Naive thymus-derived CD4-positive, alpha-beta T cell (primary cell): ENCODE measurements at regions of chr1 and their contacts with region 1.

Region 1: GRCh38 chr1:56584910-56585528 is 5.7 kb upstream of the PLPP3 start:
- DNase-seq: no peak
- ATAC-seq: no peak
- H3K4me3 ChIP-seq: no peak overlapping the region
- H3K4me3 Mint-ChIP-seq: no peak overlapping the region
- H3K27ac ChIP-seq: no peak overlapping the region
- H3K27ac Mint-ChIP-seq: no peak overlapping the region
- H3K4me1 ChIP-seq: no peaks in the 10 kb centered on the region
- H3K4me1 Mint-ChIP-seq: peaks cover 0 to 2% (median 0%) of the 10 kb centered on the region in 7 donors
- H3K27me3 ChIP-seq: no peaks in the 10 kb centered on the region
- H3K27me3 Mint-ChIP-seq: peaks cover 13 to 18% (median 16%) of the 10 kb centered on the region in 5 donors

Region 2: GRCh38 chr1:54950369-54951163 is 1634.5 kb before region 1 on chr1:
- CTCF ChIA-PET with region 1: no interaction called
- POLR2A ChIA-PET with region 1: no interaction called
- intact Hi-C with region 1: loop called in 1 of 2 experiments (anchors 5 kb)
- DNase-seq: peak in 5 of 9 donors; percentile 7 to 53 (median 22)
- ATAC-seq: peak; percentile 65
- H3K4me3 ChIP-seq: no peak overlapping the region
- H3K4me3 Mint-ChIP-seq: peak overlapping the region in 3 of 10 donors; percentile 25 to 48 (median 43)
- H3K27ac ChIP-seq: no peak overlapping the region
- H3K27ac Mint-ChIP-seq: no peak overlapping the region
- H3K4me1 ChIP-seq: peaks cover 0 to 4% of the 10 kb centered on the region in 2 donors
- H3K4me1 Mint-ChIP-seq: peaks cover 0 to 17% (median 4%) of the 10 kb centered on the region in 7 donors
- H3K27me3 ChIP-seq: no peaks in the 10 kb centered on the region
- H3K27me3 Mint-ChIP-seq: peaks cover 0 to 11% (median 4%) of the 10 kb centered on the region in 5 donors

Region 3: DNA sequence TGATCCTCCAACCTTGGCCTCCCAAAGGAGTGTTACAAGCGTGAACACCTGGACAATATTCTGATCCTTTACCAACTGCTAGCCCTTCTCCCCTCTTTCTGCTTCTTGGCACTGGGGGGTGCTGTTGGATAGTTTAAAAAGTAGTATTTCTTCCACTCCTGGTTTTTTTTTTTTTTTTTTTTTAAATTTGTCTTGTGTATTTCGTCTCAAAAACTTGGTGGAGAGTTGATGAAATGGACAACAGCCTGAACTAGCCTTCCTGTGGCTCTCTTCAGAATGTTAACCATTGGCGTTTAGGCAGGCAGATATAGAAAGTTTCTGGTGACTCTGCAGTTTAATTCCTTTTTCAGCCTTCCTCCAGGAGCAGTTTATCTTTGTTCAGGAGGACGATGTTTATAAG is 1300.2 kb before region 1 on chr1:
- CTCF ChIA-PET with region 1: no interaction called
- POLR2A ChIA-PET with region 1: no interaction called
- intact Hi-C with region 1: loop called in 1 of 2 experiments (anchors 5 kb)
- DNase-seq: peak in 1 of 9 donors; percentile 8
- ATAC-seq: no peak
- H3K4me3 ChIP-seq: no peak overlapping the region
- H3K4me3 Mint-ChIP-seq: no peak overlapping the region
- H3K27ac ChIP-seq: no peak overlapping the region
- H3K27ac Mint-ChIP-seq: no peak overlapping the region
- H3K4me1 ChIP-seq: no peaks in the 10 kb centered on the region
- H3K4me1 Mint-ChIP-seq: no peaks in the 10 kb centered on the region
- H3K27me3 ChIP-seq: no peaks in the 10 kb centered on the region
- H3K27me3 Mint-ChIP-seq: peaks cover 0 to 14% (median 0%) of the 10 kb centered on the region in 5 donors

Region 4: GRCh38 chr1:55375617-55376258 is 1209.3 kb before region 1 on chr1:
- CTCF ChIA-PET with region 1: no interaction called
- POLR2A ChIA-PET with region 1: no interaction called
- intact Hi-C with region 1: loop called in 1 of 2 experiments (anchors 2 kb)
- DNase-seq: peak in 5 of 9 donors; percentile 3 to 31 (median 20)
- ATAC-seq: peak; percentile 46
- H3K4me3 ChIP-seq: no peak overlapping the region
- H3K4me3 Mint-ChIP-seq: no peak overlapping the region
- H3K27ac ChIP-seq: no peak overlapping the region
- H3K27ac Mint-ChIP-seq: no peak overlapping the region
- H3K4me1 ChIP-seq: no peaks in the 10 kb centered on the region
- H3K4me1 Mint-ChIP-seq: peaks cover 1 to 14% (median 11%) of the 10 kb centered on the region in 7 donors
- H3K27me3 ChIP-seq: no peaks in the 10 kb centered on the region
- H3K27me3 Mint-ChIP-seq: peaks cover 0 to 6% (median 0%) of the 10 kb centered on the region in 5 donors

Region 5: GRCh38 chr1:55702064-55702463 is 883.0 kb before region 1 on chr1:
- CTCF ChIA-PET with region 1: no interaction called
- POLR2A ChIA-PET with region 1: no interaction called
- intact Hi-C with region 1: loop called in 1 of 2 experiments (anchors 10 kb)
- DNase-seq: no peak
- ATAC-seq: no peak
- H3K4me3 ChIP-seq: no peak overlapping the region
- H3K4me3 Mint-ChIP-seq: no peak overlapping the region
- H3K27ac ChIP-seq: no peak overlapping the region
- H3K27ac Mint-ChIP-seq: no peak overlapping the region
- H3K4me1 ChIP-seq: no peaks in the 10 kb centered on the region
- H3K4me1 Mint-ChIP-seq: no peaks in the 10 kb centered on the region
- H3K27me3 ChIP-seq: no peaks in the 10 kb centered on the region
- H3K27me3 Mint-ChIP-seq: peaks cover 0 to 29% (median 12%) of the 10 kb centered on the region in 5 donors

Region 6: DNA sequence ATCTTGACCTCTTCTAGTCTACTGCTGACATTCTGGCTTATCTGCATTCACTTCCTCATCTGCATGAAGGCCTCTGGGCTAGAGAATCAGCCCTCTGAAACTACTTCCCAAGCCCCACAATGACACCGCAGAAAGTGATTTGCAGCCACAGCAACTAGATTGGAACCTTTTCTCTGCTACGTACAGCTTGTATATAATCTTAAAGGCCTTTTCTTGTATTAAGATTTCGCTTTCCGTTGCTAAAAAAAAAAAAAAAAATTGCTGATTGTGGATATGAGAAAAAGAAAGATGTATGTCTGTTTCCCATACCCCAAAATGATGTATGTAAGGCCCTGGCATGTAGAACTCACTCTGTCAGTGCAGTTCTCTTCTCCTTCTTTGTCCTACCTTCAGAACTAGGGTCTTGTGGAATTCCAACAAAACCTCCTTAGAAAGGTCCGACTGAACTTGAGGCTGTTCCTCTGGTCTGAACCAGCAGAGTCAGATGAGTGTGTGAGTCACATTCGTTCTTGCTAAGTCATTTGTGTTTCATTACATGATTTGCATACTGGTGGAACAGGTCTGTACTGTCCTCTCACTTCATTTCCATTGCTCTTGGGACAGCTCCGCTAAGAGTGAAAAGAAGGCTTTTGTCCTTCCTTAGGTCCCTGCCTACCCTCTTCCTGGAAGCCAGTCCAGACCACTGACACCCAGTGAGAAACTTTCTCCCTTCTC is 68.3 kb before region 1 on chr1:
- CTCF ChIA-PET with region 1: no interaction called
- POLR2A ChIA-PET with region 1: no interaction called
- intact Hi-C with region 1: no loop called
- DNase-seq: no peak
- ATAC-seq: peak; percentile 85
- H3K4me3 ChIP-seq: no peak overlapping the region
- H3K4me3 Mint-ChIP-seq: no peak overlapping the region
- H3K27ac ChIP-seq: no peak overlapping the region
- H3K27ac Mint-ChIP-seq: no peak overlapping the region
- H3K4me1 ChIP-seq: no peaks in the 10 kb centered on the region
- H3K4me1 Mint-ChIP-seq: peaks cover 0 to 4% (median 0%) of the 10 kb centered on the region in 7 donors
- H3K27me3 ChIP-seq: no peaks in the 10 kb centered on the region
- H3K27me3 Mint-ChIP-seq: peaks cover 0 to 6% (median 0%) of the 10 kb centered on the region in 5 donors

Region 7: DNA sequence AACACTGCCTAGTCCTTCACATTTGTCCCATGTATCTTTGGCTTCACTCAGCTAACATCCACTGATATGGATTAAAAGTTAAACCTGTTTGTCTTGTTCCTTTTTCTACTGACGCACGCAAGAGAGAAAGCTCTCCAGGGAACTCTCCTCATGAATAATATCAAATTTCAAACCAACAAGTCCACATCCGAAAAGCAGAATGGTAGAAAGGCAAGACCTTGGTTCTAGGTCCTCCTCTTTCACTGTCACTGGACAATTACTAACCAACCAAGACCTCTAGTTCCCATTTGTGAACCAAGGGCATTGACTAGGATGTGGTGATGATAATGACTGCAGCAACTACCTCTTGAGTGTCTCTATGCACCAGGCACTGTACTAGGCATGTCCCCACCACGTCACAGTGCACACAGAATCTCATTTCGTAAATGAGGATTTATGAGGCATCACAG is 14.1 kb before region 1 on chr1:
- CTCF ChIA-PET with region 1: no interaction called
- POLR2A ChIA-PET with region 1: no interaction called
- intact Hi-C with region 1: no loop called
- DNase-seq: no peak
- ATAC-seq: no peak
- H3K4me3 ChIP-seq: no peak overlapping the region
- H3K4me3 Mint-ChIP-seq: no peak overlapping the region
- H3K27ac ChIP-seq: no peak overlapping the region
- H3K27ac Mint-ChIP-seq: no peak overlapping the region
- H3K4me1 ChIP-seq: no peaks in the 10 kb centered on the region
- H3K4me1 Mint-ChIP-seq: no peaks in the 10 kb centered on the region
- H3K27me3 ChIP-seq: no peaks in the 10 kb centered on the region
- H3K27me3 Mint-ChIP-seq: peaks cover 2 to 20% (median 6%) of the 10 kb centered on the region in 5 donors